Activated naive CD4-positive, alpha-beta T cell treated with anti-CD3 and anti-CD28 coated beads for 36 hours (primary cell): ENCODE measurements at regions of chr20 and their contacts with region 1.

Region 1: DNA sequence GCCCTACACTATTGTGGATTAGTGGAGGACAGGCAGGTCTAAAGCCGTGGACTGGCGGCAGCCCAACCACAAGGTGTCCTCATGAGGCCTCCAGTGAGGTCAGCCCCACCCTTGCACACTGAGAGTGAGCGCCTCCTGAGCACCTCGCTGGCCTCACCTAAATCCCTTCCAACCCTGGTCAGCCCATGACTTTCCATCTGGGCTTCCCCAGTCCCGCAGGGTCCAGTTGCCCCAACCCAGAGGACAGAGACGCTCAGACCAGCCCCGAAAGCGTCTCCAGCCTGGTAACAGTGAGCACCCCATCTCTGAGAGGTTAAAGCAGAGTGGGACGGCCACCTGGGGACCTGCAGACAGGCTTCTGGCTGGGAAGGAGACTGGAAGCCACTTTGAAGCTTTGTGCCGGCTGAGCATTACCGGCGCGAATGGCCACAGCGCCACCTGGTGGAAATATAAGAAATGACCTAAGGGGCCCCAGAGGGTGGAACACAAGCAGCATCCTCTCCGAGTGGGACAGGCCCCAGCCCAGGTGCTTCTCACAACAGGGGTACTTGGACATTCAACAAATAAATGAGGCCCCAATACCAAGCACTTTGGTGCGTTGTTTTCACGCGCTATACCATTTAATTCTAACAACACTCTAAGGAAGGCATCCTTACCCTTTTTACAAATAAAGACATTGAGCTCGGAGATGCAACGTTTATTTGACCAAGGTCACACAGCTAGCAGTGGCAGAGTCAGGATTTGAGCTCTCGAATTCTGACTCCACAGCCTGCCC is 65.7 kb upstream of the TOP1 start:
- DNase-seq: peak; percentile 80
- H3K4me3 Mint-ChIP-seq: no peak overlapping the region
- H3K27ac Mint-ChIP-seq: no peak overlapping the region
- H3K4me1 Mint-ChIP-seq: peaks cover 5% of the 10 kb centered on the region
- H3K27me3 Mint-ChIP-seq: no peaks in the 10 kb centered on the region

Region 2: DNA sequence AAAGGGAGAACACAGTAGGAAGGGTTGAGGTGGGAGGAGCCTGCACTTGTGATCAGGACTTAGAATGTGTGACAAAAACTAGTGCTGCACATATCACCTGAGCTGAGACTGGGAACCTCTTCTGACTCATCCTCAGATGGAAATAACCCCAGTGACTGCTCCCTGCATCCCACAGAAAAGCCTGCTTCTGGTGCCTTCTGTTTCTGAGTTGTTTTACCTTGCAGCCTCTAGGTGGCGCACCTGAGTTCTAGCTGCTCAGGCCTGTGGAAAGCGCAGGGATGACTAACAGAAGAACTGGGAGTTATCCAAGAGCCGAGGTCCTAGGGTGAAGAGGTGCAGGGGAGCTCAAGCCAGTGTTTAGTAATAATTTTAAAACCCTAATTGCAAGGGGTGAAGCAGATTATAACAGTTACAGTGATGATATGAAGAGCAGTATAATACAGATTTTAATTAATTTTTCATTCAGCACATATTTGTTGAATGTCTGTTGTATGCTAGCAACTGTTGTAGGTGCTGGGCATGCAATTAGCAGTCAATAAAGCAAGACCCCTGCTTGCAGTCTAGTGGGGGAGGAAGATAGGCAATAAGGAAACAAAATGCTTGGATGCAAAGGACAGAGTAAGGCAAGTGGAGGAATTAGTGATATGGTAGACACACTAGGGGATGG is 1698.3 kb before region 1 on chr20:
- CTCF ChIA-PET with region 1: no interaction called
- intact Hi-C with region 1: loop called (anchors 10 kb)
- DNase-seq: peak; percentile 65
- H3K4me3 Mint-ChIP-seq: no peak overlapping the region
- H3K27ac Mint-ChIP-seq: no peak overlapping the region
- H3K4me1 Mint-ChIP-seq: no peaks in the 10 kb centered on the region
- H3K27me3 Mint-ChIP-seq: peaks cover 2% of the 10 kb centered on the region

Region 3: GRCh38 chr20:40160097-40160550 is 802.8 kb before region 1 on chr20:
- CTCF ChIA-PET with region 1: no interaction called
- intact Hi-C with region 1: loop called (anchors 10 kb)
- DNase-seq: peak; percentile 18
- H3K4me3 Mint-ChIP-seq: no peak overlapping the region
- H3K27ac Mint-ChIP-seq: no peak overlapping the region
- H3K4me1 Mint-ChIP-seq: no peaks in the 10 kb centered on the region
- H3K27me3 Mint-ChIP-seq: no peaks in the 10 kb centered on the region

Region 4: GRCh38 chr20:40741507-40742106 is 221.3 kb before region 1 on chr20:
- CTCF ChIA-PET with region 1: interaction called, 37 read pairs
- intact Hi-C with region 1: loop called (anchors 1 kb)
- DNase-seq: peak; percentile 60
- H3K4me3 Mint-ChIP-seq: no peak overlapping the region
- H3K27ac Mint-ChIP-seq: no peak overlapping the region
- H3K4me1 Mint-ChIP-seq: no peaks in the 10 kb centered on the region
- H3K27me3 Mint-ChIP-seq: peaks cover 7% of the 10 kb centered on the region

Region 5: GRCh38 chr20:41095110-41095969 is 132.4 kb after region 1 on chr20:
- CTCF ChIA-PET with region 1: interaction called, 39 read pairs
- intact Hi-C with region 1: loop called (anchors 1 kb)
- DNase-seq: peak; percentile 70
- H3K4me3 Mint-ChIP-seq: no peak overlapping the region
- H3K27ac Mint-ChIP-seq: peak overlapping the region; percentile 61
- H3K4me1 Mint-ChIP-seq: peaks cover 14% of the 10 kb centered on the region
- H3K27me3 Mint-ChIP-seq: no peaks in the 10 kb centered on the region

Region 6: GRCh38 chr20:41222703-41223102 is 259.8 kb after region 1 on chr20:
- CTCF ChIA-PET with region 1: no interaction called
- intact Hi-C with region 1: no loop called
- DNase-seq: no peak
- H3K4me3 Mint-ChIP-seq: no peak overlapping the region
- H3K27ac Mint-ChIP-seq: no peak overlapping the region
- H3K4me1 Mint-ChIP-seq: no peaks in the 10 kb centered on the region
- H3K27me3 Mint-ChIP-seq: no peaks in the 10 kb centered on the region